ENCODE measurements at regions of chr6 and their contacts with region 1.

Region 1: GRCh38 chr6:113994918-113995342 is 24.0 kb upstream of the HDAC2 start:
- ATAC-seq: peak; percentile 38 to 96 (median 75)
- H3K4me3 ChIP-seq: no peak overlapping the region
- H3K27ac ChIP-seq: no peak overlapping the region
- H3K4me1 ChIP-seq: peaks cover 5 to 11% of the 10 kb centered on the region in 2 donors

Region 2: GRCh38 chr6:114284281-114284680 is 289.4 kb after region 1 on chr6:
- in situ Hi-C with region 1: loop called in 1 of 9 experiments (anchors 25 kb)
- ATAC-seq: peak in 1 of 8 experiments; percentile 36
- H3K4me3 ChIP-seq: no peak overlapping the region
- H3K27ac ChIP-seq: no peak overlapping the region
- H3K4me1 ChIP-seq: peaks cover 11 to 16% of the 10 kb centered on the region in 2 donors